CD4-positive, alpha-beta T cell (primary cell): ENCODE measurements at regions of chr1 and their contacts with region 1.

Region 1: DNA sequence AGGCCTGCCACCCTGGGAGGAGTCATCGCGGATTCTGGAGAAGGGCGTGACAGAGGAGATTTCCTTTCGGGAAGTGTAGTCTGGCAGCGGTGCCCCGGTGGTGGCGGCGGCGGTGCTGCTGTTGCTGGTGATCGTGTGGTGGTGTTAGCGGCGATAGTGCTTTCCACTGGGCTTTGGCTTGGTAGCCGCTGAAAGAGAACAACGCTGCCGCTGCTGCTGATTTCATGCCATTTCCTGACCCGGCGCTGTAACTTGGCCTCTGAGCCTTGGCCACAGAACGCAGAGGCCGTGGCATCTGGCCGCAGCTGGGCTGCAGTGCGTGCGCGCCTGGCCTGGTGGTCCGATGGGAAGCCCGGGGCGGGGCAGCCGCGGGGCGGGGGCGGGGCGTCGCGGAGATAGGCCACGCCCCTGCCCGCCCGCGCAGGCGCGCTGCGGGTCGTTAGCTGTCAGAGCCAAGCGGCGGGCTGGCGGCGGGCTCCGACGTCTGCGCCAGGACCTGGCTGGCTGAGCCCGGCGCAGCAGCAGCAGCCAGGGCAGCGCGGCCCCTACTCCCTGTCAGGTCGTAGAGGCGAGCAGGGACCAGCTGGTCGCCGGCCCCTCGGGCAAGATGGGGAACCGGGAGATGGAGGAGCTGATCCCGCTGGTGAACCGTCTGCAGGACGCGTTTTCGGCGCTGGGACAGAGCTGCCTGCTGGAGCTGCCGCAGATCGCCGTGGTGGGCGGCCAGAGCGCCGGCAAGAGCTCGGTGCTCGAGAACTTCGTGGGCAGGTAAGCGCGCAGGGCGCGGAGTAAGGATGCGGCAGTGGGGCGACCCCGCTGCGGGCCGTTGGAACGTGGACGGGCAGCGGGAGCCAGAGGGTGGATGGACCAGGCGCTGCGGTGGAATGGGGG is at the start of gene DNM3:
- DNase-seq: peak; percentile 54 to 90 (median 75)
- ATAC-seq: peak; percentile 94
- H3K4me3 ChIP-seq: peak within 1 kb of the TSS; percentile 80
- H3K4me3 Mint-ChIP-seq: peak within 1 kb of the TSS; percentile 94
- H3K27ac ChIP-seq: no peak within 1 kb of the TSS
- H3K27ac Mint-ChIP-seq: peak within 1 kb of the TSS; percentile 69
- H3K4me1 ChIP-seq: peaks cover 17% of the 10 kb centered on the region
- H3K4me1 Mint-ChIP-seq: peaks cover 18% of the 10 kb centered on the region
- H3K27me3 ChIP-seq: peaks cover 4 to 10% of the 10 kb centered on the region in 2 experiments
- H3K27me3 Mint-ChIP-seq: peaks cover 5% of the 10 kb centered on the region
- CTCF ChIP-seq: no peak
- total RNA-seq, gene DNM3: 1.6 to 1.8 TPM

Region 2: GRCh38 chr1:170284951-170285350 is 1556.3 kb before region 1 on chr1:
- CTCF ChIA-PET with region 1: no interaction called
- POLR2A ChIA-PET with region 1: no interaction called
- intact Hi-C with region 1: no loop called
- DNase-seq: no peak
- ATAC-seq: no peak
- H3K4me3 ChIP-seq: no peak overlapping the region
- H3K4me3 Mint-ChIP-seq: no peak overlapping the region
- H3K27ac ChIP-seq: no peak overlapping the region
- H3K27ac Mint-ChIP-seq: no peak overlapping the region
- H3K4me1 ChIP-seq: no peaks in the 10 kb centered on the region
- H3K4me1 Mint-ChIP-seq: no peaks in the 10 kb centered on the region
- H3K27me3 ChIP-seq: no peaks in the 10 kb centered on the region
- H3K27me3 Mint-ChIP-seq: peaks cover 6% of the 10 kb centered on the region
- CTCF ChIP-seq: no peak

Region 3: DNA sequence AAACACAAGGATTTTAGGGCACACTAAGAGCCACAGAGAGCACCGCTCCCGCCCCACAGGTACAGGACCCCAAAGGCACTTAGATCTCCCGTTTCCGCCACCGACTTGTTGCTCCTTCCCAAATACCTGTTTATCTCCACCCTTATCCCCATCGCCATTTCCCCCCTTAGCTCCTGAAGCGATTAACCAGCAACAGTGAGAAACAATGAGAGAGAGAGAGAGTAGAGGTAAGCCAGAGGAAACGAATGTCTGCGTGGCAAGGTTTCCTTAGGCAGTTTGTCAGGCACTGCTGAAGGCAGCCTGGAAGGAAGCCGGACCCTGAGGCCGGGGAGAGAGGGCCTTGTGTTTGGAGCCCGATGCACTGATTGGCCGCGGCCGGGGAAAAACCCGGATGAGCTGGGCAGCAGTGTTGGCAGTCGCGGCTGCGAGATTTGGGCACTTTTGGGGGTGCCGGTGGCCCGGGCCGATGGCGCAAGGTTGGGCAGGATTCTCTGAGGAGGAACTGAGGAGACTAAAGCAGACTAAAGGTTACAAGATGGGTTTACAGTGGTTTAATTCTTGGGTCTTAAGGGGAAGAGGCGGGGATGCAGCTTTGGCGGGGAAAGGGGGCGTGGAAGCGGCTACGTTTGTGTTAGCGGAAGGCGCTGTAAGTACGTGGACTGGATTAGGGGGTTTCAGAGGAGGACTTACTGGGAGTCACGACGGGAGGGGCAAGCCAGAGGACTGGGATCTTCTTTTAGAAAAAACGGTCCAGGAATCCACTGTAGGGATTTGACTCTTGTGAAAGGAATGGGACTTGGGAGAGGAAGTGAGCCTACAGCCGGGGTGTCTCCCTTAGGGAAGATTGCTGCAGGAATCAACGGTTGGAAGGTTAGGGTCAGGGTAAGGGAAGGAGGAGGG is 1309.3 kb before region 1 on chr1 and contains the start of gene GORAB:
- CTCF ChIA-PET with region 1: no interaction called
- POLR2A ChIA-PET with region 1: no interaction called
- intact Hi-C with region 1: loop called in 1 of 2 experiments (anchors 10 kb)
- DNase-seq: peak; percentile 69 to 92 (median 78)
- ATAC-seq: peak; percentile 91
- H3K4me3 ChIP-seq: peak within 1 kb of the TSS; percentile 61
- H3K4me3 Mint-ChIP-seq: no peak within 1 kb of the TSS
- H3K27ac ChIP-seq: peak within 1 kb of the TSS; percentile 73 to 86
- H3K27ac Mint-ChIP-seq: no peak within 1 kb of the TSS
- H3K4me1 ChIP-seq: peaks cover 12% of the 10 kb centered on the region
- H3K4me1 Mint-ChIP-seq: peaks cover 20% of the 10 kb centered on the region
- H3K27me3 ChIP-seq: no peaks in the 10 kb centered on the region
- H3K27me3 Mint-ChIP-seq: no peaks in the 10 kb centered on the region
- CTCF ChIP-seq: no peak
- total RNA-seq, gene GORAB: 23.0 to 26.6 TPM

Region 4: GRCh38 chr1:171188388-171189266 is 652.7 kb before region 1 on chr1:
- CTCF ChIA-PET with region 1: no interaction called
- POLR2A ChIA-PET with region 1: no interaction called
- intact Hi-C with region 1: no loop called
- DNase-seq: peak in 11 of 14 experiments; percentile 1 to 65 (median 9)
- ATAC-seq: peak; percentile 43
- H3K4me3 ChIP-seq: no peak overlapping the region
- H3K4me3 Mint-ChIP-seq: no peak overlapping the region
- H3K27ac ChIP-seq: no peak overlapping the region
- H3K27ac Mint-ChIP-seq: no peak overlapping the region
- H3K4me1 ChIP-seq: no peaks in the 10 kb centered on the region
- H3K4me1 Mint-ChIP-seq: no peaks in the 10 kb centered on the region
- H3K27me3 ChIP-seq: peaks cover 0 to 5% of the 10 kb centered on the region in 2 experiments
- H3K27me3 Mint-ChIP-seq: peaks cover 31% of the 10 kb centered on the region
- CTCF ChIP-seq: peak; percentile 67

Region 5: DNA sequence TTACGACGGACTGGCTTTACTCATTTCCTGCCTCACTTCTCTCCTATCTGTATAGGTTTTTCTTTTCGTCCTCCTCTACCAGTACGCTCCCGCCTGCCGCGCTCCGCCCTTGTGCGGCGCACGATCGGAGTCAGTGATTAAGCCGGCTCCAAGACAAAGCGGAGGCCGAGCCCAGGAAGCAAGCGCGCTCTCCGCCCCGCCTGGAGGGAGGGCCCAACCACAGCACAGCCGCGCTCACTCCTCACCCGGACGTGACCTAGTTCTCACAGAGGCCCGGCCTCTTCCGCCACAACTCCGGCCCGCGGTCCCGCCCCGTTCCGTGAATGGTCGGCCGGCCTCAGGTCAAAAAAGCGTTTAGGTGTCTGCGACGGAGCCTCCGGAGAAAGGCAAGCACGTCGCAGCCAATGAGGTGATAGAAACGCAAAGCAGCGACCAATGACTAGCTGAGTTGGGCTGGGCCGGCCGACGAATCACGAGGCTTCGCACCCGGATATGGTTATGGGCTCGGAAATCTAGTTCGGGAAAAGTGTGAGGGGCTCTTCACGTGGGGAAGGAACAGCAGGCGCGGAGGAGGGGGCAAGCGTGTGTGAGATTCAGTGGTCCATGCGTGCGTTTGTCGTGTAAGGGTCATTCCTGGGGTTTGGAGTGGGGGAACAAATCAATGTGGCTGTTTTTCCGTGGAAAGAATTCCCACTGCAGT is 60.0 kb before region 1 on chr1 and contains the start of gene METTL13:
- CTCF ChIA-PET with region 1: no interaction called
- POLR2A ChIA-PET with region 1: interaction called, 14 read pairs
- intact Hi-C with region 1: loop called (anchors 1 to 2 kb)
- DNase-seq: peak; percentile 95 to 100 (median 98)
- ATAC-seq: peak; percentile 91
- H3K4me3 ChIP-seq: peak within 1 kb of the TSS; percentile 78
- H3K4me3 Mint-ChIP-seq: peak within 1 kb of the TSS; percentile 99
- H3K27ac ChIP-seq: peak within 1 kb of the TSS; percentile 63 to 75
- H3K27ac Mint-ChIP-seq: peak within 1 kb of the TSS; percentile 90
- H3K4me1 ChIP-seq: peaks cover 46% of the 10 kb centered on the region
- H3K4me1 Mint-ChIP-seq: peaks cover 47% of the 10 kb centered on the region
- H3K27me3 ChIP-seq: no peaks in the 10 kb centered on the region
- H3K27me3 Mint-ChIP-seq: no peaks in the 10 kb centered on the region
- CTCF ChIP-seq: no peak
- total RNA-seq, gene METTL13: 6.5 to 7.9 TPM

Region 6: GRCh38 chr1:172443626-172444453 is 602.5 kb after region 1 on chr1 and contains the start of gene PIGC:
- CTCF ChIA-PET with region 1: no interaction called
- POLR2A ChIA-PET with region 1: no interaction called
- intact Hi-C with region 1: loop called in 1 of 2 experiments (anchors 5 kb)
- DNase-seq: peak; percentile 86 to 95 (median 92)
- ATAC-seq: peak; percentile 99
- H3K4me3 ChIP-seq: peak within 1 kb of the TSS; percentile 92
- H3K4me3 Mint-ChIP-seq: peak within 1 kb of the TSS; percentile 98
- H3K27ac ChIP-seq: peak within 1 kb of the TSS; percentile 69 to 79
- H3K27ac Mint-ChIP-seq: peak within 1 kb of the TSS; percentile 90
- H3K4me1 ChIP-seq: peaks cover 17% of the 10 kb centered on the region
- H3K4me1 Mint-ChIP-seq: peaks cover 39% of the 10 kb centered on the region
- H3K27me3 ChIP-seq: no peaks in the 10 kb centered on the region
- H3K27me3 Mint-ChIP-seq: no peaks in the 10 kb centered on the region
- CTCF ChIP-seq: peak; percentile 86
- total RNA-seq, gene PIGC: 23.7 to 27.1 TPM